ENCODE measurements at regions of chr4 and their contacts with region 1.

Region 1: DNA sequence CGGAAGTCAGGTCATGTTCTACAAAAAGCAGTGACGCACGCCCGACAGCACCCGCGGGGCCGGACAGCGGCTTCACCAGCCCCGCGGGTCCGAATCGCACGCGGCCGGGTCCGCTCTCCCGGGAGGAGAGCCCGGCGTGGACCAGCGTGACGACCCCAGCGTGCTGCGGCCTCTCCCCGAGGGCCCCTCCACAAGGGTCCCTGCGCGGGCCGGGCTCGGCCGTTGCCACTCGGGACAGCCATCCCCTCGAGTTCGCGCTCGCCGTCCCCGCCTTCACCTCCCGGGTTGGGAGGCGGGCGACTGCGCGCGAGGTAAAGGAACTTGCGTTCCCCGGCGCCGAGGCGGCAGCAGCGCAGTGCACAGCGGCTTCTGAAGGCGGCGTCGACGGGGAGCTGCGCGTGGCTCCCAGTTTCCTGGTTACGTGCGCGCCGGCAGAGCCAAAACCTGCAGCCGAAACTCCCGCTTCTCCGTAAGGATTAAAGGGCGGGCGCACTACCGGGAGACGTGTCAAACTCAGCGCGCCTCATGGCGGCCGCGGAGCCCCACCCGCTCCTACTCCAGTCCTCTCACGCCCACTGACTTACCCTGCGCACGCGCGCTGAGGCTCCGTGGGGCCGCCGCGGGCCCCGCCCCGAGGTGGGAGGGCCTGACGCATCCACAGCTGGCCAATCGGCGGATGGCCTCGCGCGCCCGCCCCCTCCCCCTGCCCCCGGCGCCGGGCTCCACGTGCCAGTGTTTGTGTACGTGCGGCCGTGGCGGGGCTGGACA is 416 bp upstream of the LRP2BP start:
- DNase-seq: peak; percentile 98
- H3K4me3 ChIP-seq: peak overlapping the region; percentile 59 to 80
- H3K27ac ChIP-seq: peak overlapping the region; percentile 99 to 100
- H3K4me1 ChIP-seq: no peaks in the 10 kb centered on the region
- H3K27me3 ChIP-seq: no peaks in the 10 kb centered on the region
- CTCF ChIP-seq: no peak
- POLR2A ChIP-seq: no peak

Region 2: GRCh38 chr4:185142912-185143595 is 253.1 kb before region 1 on chr4 and contains the start of gene SLC25A4:
- intact Hi-C with region 1: loop called (anchors 5 kb)
- DNase-seq: peak; percentile 83
- H3K4me3 ChIP-seq: peak within 1 kb of the TSS; percentile 68 to 85
- H3K27ac ChIP-seq: peak within 1 kb of the TSS; percentile 81 to 83
- H3K4me1 ChIP-seq: no peaks in the 10 kb centered on the region
- H3K27me3 ChIP-seq: no peaks in the 10 kb centered on the region
- CTCF ChIP-seq: peak; percentile 24 to 71 (median 48)
- POLR2A ChIP-seq: peak; percentile 93
- total RNA-seq, gene SLC25A4: 46.0 to 105 TPM

Region 3: DNA sequence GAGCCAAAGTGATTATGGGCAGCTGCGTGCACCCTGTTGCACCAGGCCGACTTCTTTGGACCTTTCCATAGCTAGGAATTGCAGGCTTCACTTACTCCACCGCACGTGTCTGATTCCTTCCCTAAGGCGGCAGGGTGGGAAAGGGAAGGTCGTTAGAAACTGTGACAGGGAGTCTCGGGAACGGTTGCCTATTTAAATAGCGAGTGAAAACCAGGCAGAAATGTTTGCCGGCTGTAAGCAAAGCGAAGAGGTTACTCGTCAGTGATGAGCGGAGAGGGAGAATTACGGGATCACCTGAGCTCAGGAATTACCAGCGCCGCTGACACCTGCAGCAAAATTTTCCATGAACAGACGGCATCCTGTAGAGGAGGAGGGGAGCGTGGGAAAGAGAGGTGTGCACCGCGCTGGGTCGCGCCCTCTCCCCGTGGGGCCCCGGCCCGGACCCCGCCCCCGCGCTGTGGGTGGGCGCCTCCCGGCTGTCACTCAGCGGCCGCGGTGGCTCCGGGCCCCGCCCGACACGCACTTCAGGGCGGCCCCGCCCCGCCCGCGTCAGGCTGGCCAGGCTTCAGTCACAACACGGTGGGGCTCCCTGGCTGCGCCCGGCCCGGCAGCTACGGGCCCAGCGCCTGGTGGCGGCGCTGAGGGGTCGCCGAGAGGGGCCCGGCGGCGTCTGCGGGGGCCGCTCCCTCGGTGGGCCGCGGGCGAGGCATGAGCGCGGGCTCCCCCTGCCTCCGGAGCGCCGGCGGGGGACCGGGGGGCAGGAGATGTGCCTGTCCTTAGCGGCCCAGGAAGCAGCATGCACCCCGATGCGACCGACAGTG is 186.9 kb before region 1 on chr4 and contains the start of gene SNX25:
- intact Hi-C with region 1: loop called (anchors 5 kb)
- DNase-seq: peak; percentile 89
- H3K4me3 ChIP-seq: peak within 1 kb of the TSS; percentile 82
- H3K27ac ChIP-seq: peak within 1 kb of the TSS; percentile 85 to 95
- H3K4me1 ChIP-seq: peaks cover 7% of the 10 kb centered on the region
- H3K27me3 ChIP-seq: no peaks in the 10 kb centered on the region
- CTCF ChIP-seq: peak in 3 of 4 experiments; percentile 11 to 54 (median 52)
- POLR2A ChIP-seq: peak; percentile 96
- total RNA-seq, gene SNX25: 26.4 to 49.5 TPM

Region 4: GRCh38 chr4:185597532-185598188 is 201.5 kb after region 1 on chr4:
- intact Hi-C with region 1: loop called (anchors 10 kb)
- DNase-seq: peak; percentile 57
- H3K4me3 ChIP-seq: no peak overlapping the region
- H3K27ac ChIP-seq: no peak overlapping the region
- H3K4me1 ChIP-seq: no peaks in the 10 kb centered on the region
- H3K27me3 ChIP-seq: no peaks in the 10 kb centered on the region
- CTCF ChIP-seq: peak; percentile 93 to 98 (median 96)
- POLR2A ChIP-seq: no peak

Region 5: DNA sequence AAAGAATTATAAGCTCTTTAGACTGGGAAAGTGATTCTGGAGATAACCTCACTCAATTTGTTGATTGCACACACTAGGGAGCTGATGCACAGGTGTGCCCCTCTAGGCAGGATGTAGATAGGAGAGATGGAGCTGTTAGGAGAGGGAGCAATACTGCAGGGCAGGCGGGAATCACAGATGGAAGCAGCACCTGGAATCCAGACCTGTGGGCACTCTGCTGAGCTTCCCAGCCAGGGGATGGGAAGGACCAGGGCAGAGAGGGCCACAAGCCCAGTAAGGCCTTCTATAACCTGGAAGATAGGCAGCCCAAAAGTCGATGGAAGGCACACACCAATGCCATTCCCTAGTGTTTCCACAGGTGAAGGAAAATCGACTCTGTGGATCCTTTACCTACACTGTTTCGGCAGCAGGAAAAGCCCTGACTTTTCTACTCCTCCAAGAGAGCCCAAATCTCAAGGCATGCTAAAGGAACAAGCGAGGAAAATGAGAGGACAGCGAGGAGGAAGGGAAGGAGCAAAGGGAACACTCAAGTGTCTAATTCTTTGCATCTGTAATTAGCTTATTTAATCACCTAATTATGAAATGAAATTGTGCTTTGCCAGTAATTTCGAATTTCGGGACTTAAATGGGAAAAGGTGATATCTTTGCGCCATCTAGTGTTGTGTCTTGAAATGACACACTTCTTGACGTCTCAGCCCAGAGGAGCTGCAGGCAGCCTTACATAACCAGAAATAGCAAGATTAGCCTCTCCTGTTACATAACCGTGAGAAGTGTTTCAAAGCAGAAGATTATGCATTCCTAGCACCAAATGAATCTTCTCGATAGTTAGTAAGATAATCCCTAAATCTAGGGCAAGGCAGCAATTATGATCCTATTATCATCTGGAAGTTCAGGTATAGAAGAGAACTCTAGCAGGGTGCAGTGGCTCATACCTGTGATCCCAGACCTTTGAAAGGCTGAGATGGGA is 641.8 kb after region 1 on chr4:
- intact Hi-C with region 1: loop called (anchors 10 kb)
- DNase-seq: peak; percentile 67
- H3K4me3 ChIP-seq: no peak overlapping the region
- H3K27ac ChIP-seq: no peak overlapping the region
- H3K4me1 ChIP-seq: peaks cover under 1% of the 10 kb centered on the region
- H3K27me3 ChIP-seq: no peaks in the 10 kb centered on the region
- CTCF ChIP-seq: peak; percentile 74 to 88 (median 82)
- POLR2A ChIP-seq: no peak

Measured in prostate gland (tissue), 2 donors.